ENCODE measurements at regions of chr1 and their contacts with region 1.

Region 1: DNA sequence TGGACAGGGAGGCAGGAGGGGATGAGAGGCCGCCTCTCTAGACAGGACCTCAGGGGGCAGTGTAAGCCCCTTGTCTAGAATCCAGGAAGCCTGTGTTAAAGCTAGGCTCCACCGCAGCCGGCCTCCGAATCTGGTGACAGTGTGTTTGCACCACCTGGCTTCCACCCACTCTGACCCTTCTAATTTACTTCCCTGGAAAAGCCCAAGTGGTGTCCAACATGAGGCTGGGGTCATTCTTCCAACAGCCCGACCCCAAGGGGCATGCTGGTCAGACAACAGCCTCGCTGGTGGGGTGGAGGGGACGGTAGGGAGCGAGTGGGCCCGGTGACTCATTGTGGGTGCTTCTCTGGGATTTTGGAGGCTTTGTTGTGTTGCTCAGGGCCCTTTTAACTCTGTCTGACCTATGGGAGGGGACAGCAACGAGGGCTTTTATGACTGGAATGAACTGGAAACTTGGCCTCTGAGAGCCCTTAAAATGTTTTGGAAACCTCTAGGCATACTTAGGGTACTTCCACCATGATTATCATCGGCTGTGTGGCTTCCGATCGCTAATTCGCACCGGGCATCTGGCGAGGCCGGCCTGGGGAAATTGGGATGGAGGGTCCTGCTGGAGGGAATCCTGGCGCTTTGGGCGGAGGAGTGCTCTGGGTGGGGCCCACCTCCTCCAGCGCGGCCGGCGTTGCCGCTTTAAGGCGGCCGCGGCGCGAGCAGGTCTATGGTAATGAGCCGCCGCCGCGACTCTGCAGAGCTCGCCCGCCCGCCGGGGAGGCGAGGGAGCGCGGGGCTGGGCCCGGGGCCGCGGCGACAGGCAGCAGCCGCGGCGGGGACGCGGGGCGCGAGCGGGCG is at the start of gene CELSR2:
- DNase-seq: peak; percentile 49 to 73 (median 60)
- ATAC-seq: peak; percentile 91
- H3K4me3 ChIP-seq: peak within 1 kb of the TSS; percentile 58
- H3K4me3 Mint-ChIP-seq: peak within 1 kb of the TSS; percentile 65 to 85 (median 72)
- H3K27ac ChIP-seq: no peak within 1 kb of the TSS
- H3K27ac Mint-ChIP-seq: peak within 1 kb of the TSS in 1 of 9 donors; percentile 43
- H3K4me1 ChIP-seq: peaks cover 11 to 15% of the 10 kb centered on the region in 2 donors
- H3K4me1 Mint-ChIP-seq: peaks cover 3 to 19% (median 13%) of the 10 kb centered on the region in 7 donors
- H3K27me3 ChIP-seq: no peaks in the 10 kb centered on the region
- H3K27me3 Mint-ChIP-seq: peaks cover 0 to 24% (median 7%) of the 10 kb centered on the region in 5 donors
- total RNA-seq, gene CELSR2: 3.0 to 6.4 (median 3.2) TPM

Region 2: DNA sequence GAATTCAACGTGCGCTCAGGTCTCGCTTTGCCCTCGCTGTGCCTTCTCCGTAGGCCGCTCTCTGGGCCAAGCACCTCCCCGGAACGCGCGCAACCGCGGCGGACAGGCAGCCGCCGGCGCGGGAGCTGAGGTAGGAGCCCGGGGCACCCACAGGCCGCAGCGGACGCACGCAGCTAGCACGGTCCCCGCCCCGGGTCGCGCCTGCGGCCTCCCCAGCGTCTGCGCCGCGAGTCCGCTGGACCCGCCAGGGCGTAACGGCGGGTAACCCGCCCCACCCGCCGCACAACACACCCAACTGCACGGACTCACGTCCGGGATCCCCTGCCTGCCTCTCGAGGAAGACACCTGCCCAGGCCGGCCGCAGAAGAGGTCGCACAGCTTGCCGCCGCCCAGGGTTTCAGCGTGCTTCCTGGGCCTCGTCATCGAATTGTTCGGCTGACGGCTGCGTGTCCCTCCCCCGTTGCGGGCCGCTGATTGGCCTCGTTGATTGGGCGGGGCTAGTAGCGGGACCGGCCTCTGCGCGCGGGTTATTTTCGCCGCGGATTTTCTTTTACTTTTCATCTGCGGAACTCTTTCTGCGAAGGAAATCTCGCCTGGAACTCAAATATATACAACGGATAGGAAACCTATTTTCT is 285.9 kb before region 1 on chr1 and contains the start of gene CLCC1:
- CTCF ChIA-PET with region 1: no interaction called
- POLR2A ChIA-PET with region 1: no interaction called
- intact Hi-C with region 1: no loop called
- DNase-seq: peak; percentile 78 to 92 (median 89)
- ATAC-seq: peak; percentile 97
- H3K4me3 ChIP-seq: peak within 1 kb of the TSS; percentile 76
- H3K4me3 Mint-ChIP-seq: peak within 1 kb of the TSS; percentile 87 to 94 (median 90)
- H3K27ac ChIP-seq: peak within 1 kb of the TSS; percentile 85
- H3K27ac Mint-ChIP-seq: peak within 1 kb of the TSS; percentile 78 to 97 (median 92)
- H3K4me1 ChIP-seq: peaks cover 11 to 16% of the 10 kb centered on the region in 2 donors
- H3K4me1 Mint-ChIP-seq: peaks cover 21 to 48% (median 37%) of the 10 kb centered on the region in 7 donors
- H3K27me3 ChIP-seq: no peaks in the 10 kb centered on the region
- H3K27me3 Mint-ChIP-seq: peaks cover 0 to 15% (median 0%) of the 10 kb centered on the region in 5 donors
- total RNA-seq, gene CLCC1: 15.4 to 34.6 (median 25.2) TPM

Region 3: DNA sequence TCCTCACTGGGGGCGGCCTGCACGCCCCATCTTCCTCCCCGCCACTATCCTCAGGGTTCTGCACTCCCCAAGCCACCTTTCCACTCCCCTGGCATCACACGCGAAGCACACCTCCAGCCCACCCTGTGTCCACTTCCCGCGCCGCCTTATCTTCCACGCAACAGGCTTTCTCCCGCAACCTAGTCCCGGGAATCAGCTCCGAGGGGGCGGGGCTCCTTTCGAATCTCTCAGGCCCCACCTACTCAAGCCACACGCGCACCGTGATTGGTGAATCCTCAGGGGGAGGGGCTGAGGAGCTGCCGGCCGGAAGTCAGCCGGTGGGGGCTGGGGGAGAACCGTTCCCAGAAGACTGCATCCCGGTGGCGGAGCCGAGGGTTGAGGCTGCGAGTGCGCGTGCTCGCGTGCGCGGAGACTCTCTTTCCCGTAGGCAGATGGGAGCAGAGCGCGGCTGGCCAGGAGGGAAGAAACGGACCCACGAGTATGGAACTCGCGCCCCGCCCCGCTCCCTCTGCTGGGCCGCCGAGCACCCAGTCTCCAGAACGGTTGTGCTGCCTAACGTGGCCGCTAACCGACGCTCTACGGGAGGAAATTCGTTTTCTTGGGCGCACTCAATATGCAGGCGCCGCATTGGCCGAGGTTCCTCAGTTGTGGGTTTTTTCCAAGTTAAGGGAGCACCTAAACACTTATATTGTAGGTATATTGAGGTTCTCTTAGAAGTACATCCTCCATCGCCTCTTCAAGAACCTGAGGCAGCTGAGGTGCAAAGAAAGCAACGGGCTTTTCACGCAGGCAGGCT is 34.1 kb after region 1 on chr1 and contains the start of gene PSRC1:
- CTCF ChIA-PET with region 1: no interaction called
- POLR2A ChIA-PET with region 1: no interaction called
- intact Hi-C with region 1: loop called (anchors 1 kb)
- DNase-seq: peak; percentile 78 to 94 (median 88)
- ATAC-seq: peak; percentile 98
- H3K4me3 ChIP-seq: peak within 1 kb of the TSS; percentile 92
- H3K4me3 Mint-ChIP-seq: peak within 1 kb of the TSS; percentile 89 to 99 (median 96)
- H3K27ac ChIP-seq: peak within 1 kb of the TSS; percentile 65
- H3K27ac Mint-ChIP-seq: peak within 1 kb of the TSS; percentile 55 to 94 (median 88)
- H3K4me1 ChIP-seq: peaks cover 8 to 11% of the 10 kb centered on the region in 2 donors
- H3K4me1 Mint-ChIP-seq: peaks cover 6 to 29% (median 14%) of the 10 kb centered on the region in 7 donors
- H3K27me3 ChIP-seq: no peaks in the 10 kb centered on the region
- H3K27me3 Mint-ChIP-seq: peaks cover 0 to 8% (median 0%) of the 10 kb centered on the region in 5 donors
- total RNA-seq, gene PSRC1: 0.38 to 16.1 (median 1.3) TPM in 4 of 5 experiments, not detected in the other

Region 4: GRCh38 chr1:109298666-109299557 is 49.9 kb after region 1 on chr1:
- CTCF ChIA-PET with region 1: no interaction called
- POLR2A ChIA-PET with region 1: no interaction called
- intact Hi-C with region 1: no loop called
- DNase-seq: peak in 1 of 9 donors; percentile 25
- ATAC-seq: no peak
- H3K4me3 ChIP-seq: no peak overlapping the region
- H3K4me3 Mint-ChIP-seq: no peak overlapping the region
- H3K27ac ChIP-seq: no peak overlapping the region
- H3K27ac Mint-ChIP-seq: no peak overlapping the region
- H3K4me1 ChIP-seq: no peaks in the 10 kb centered on the region
- H3K4me1 Mint-ChIP-seq: peaks cover 0 to 3% (median 0%) of the 10 kb centered on the region in 7 donors
- H3K27me3 ChIP-seq: no peaks in the 10 kb centered on the region
- H3K27me3 Mint-ChIP-seq: peaks cover 0 to 17% (median 10%) of the 10 kb centered on the region in 5 donors

Measured in naive thymus-derived CD4-positive, alpha-beta T cell (primary cell).